Activated T-helper 1 cell treated with anti-CD3 and anti-CD28 coated beads, Interleukin-12 subunit alpha, Interleukin-12 subunit beta, Interleukin-2, Interleukin-4 antibody, amounts not matched to agents 30 ng/mL and 10 ng/mL and 1 ng/mL, durations not matched to agents 14 hours and 24 hours and 36 hours (primary cell): ENCODE measurements at regions of chr7 and their contacts with region 1.

Region 1: DNA sequence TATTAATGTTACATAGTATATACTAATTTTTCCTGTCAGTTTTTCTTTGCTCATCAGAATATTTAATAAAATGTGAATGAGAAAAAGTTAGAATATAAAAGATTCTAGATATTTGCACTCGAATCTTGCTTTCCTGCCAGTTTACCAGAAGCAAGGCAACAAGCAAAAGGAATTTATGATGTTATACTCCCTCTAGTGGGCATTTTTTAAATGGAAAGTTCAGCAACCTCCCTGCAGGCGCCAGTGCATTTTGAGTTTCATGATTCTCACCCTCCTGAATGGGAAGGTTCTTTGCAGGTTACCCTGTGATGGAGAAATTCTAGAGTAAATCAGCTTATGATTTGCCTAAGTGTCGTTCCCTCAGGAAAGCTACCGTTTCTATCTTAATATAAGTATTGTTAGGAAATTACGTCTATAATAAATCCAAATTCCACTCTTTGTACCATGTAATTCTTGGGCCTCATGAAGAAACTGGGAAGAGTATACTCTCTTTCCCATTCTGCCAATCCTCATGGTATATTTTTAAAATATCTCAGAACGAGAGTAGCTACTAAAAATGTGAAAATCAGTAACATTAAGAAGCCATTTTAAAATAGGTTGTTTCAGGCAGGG is 350.0 kb downstream of the CRPPA start:
- DNase-seq: no peak
- H3K4me3 Mint-ChIP-seq: no peak overlapping the region
- H3K27ac Mint-ChIP-seq: no peak overlapping the region
- H3K4me1 Mint-ChIP-seq: no peaks in the 10 kb centered on the region
- H3K27me3 Mint-ChIP-seq: no peaks in the 10 kb centered on the region

Region 2: GRCh38 chr7:15305002-15305600 is 766.3 kb before region 1 on chr7:
- intact Hi-C with region 1: loop called (anchors 2 kb)
- DNase-seq: no peak
- H3K4me3 Mint-ChIP-seq: no peak overlapping the region
- H3K27ac Mint-ChIP-seq: no peak overlapping the region
- H3K4me1 Mint-ChIP-seq: no peaks in the 10 kb centered on the region
- H3K27me3 Mint-ChIP-seq: no peaks in the 10 kb centered on the region

Region 3: DNA sequence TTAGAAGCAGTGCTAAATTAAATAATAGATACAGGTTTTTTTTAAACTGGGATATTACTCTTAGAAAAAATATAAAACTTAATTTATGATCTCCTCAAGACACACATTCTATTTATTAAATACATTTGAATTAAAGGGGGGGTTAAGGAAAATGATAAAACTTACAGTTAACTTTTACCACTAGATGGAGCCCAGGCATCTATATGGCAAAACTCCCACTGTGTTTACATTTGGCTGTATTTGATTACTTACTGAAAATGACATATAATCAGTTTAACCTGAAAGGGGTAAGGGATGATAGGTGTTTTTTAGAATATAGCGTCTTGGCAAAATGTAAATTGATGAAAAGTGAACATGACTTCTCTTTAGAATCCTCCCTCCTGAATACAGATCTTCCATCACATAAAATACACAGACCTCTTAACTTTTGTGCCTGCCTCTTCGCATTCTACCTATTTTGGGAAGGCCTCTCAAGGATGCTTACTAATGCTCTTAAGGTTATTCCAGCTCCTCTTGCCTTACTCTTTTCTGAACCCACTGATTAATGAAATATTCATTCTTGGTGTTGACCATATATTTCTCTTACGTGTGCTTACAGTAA is 745.2 kb before region 1 on chr7:
- intact Hi-C with region 1: loop called (anchors 5 kb)
- DNase-seq: no peak
- H3K4me3 Mint-ChIP-seq: no peak overlapping the region
- H3K27ac Mint-ChIP-seq: no peak overlapping the region
- H3K4me1 Mint-ChIP-seq: no peaks in the 10 kb centered on the region
- H3K27me3 Mint-ChIP-seq: no peaks in the 10 kb centered on the region

Region 4: GRCh38 chr7:15874774-15875173 is 196.6 kb before region 1 on chr7:
- intact Hi-C with region 1: no loop called
- DNase-seq: no peak
- H3K4me3 Mint-ChIP-seq: no peak overlapping the region
- H3K27ac Mint-ChIP-seq: no peak overlapping the region
- H3K4me1 Mint-ChIP-seq: no peaks in the 10 kb centered on the region
- H3K27me3 Mint-ChIP-seq: no peaks in the 10 kb centered on the region